A549 (cell line): ENCODE measurements at regions of chr9 and their contacts with region 1.

Region 1: GRCh38 chr9:36166101-36166927 is 2.9 kb upstream of the CCIN start:
- DNase-seq: peak; percentile 87 to 93
- ATAC-seq: peak; percentile 85 to 93
- H3K4me3 ChIP-seq: peak overlapping the region; percentile 47
- H3K27ac ChIP-seq: peak overlapping the region; percentile 65 to 84; a peak in 5 of 6 replicates
- H3K4me1 ChIP-seq: peaks cover 39% of the 10 kb centered on the region
- CTCF ChIP-seq: peak; percentile 91
- EP300 ChIP-seq: no peak
- POLR2A ChIP-seq: no peak
- RAD21 ChIP-seq: peak; percentile 80 to 97

Region 2: GRCh38 chr9:36008774-36009300 is 157.5 kb before region 1 on chr9:
- CTCF ChIA-PET with region 1: interaction called, 61 read pairs
- POLR2A ChIA-PET with region 1: no interaction called
- DNase-seq: peak; percentile 79 to 85
- ATAC-seq: peak; percentile 90 to 99
- H3K4me3 ChIP-seq: no peak overlapping the region
- H3K27ac ChIP-seq: no peak overlapping the region
- H3K4me1 ChIP-seq: no peaks in the 10 kb centered on the region
- CTCF ChIP-seq: peak; percentile 100
- EP300 ChIP-seq: no peak
- POLR2A ChIP-seq: no peak
- RAD21 ChIP-seq: peak; percentile 85

Region 3: DNA sequence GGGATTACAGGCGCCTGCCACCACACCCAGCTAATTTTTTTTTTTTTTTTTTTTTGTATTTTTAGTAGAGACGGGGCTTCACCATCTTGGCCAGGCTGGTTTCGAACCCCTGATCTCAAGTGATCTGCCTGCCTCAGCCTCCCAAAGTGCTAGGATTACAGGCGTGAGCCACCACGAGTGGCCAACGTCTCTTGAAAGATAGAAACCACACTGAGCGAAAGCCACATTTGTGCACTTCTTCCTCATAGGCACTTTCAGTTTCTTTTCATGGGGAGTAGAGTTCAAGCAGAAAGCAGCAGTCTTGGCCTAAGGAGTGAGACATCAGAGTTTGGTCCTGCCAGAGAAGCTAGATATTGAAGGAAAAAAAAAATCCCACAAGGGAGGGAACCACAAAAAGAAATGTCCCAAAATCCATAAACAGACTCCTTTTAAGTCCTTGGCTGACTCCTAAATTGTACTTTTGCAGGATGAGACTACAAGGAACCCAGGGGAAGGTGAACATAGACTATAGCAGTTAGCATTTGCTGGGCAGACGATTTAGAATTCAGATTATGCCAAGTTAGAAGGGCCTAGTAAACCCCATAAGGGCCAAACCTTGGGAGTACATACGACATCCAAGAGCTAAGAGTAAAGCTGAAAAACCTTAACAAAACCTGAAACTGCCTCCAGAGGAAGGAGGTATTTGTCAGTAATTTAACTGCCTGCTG is 73.7 kb before region 1 on chr9:
- CTCF ChIA-PET with region 1: interaction called, 321 read pairs
- POLR2A ChIA-PET with region 1: no interaction called
- DNase-seq: no peak
- ATAC-seq: no peak
- H3K4me3 ChIP-seq: no peak overlapping the region
- H3K27ac ChIP-seq: peak overlapping the region in 1 of 2 experiments; percentile 72; a peak in 2 of 6 replicates
- H3K4me1 ChIP-seq: peaks cover 31% of the 10 kb centered on the region; the same call in 2 of the 3 replicates
- CTCF ChIP-seq: no peak
- EP300 ChIP-seq: no peak
- POLR2A ChIP-seq: no peak
- RAD21 ChIP-seq: no peak

Region 4: DNA sequence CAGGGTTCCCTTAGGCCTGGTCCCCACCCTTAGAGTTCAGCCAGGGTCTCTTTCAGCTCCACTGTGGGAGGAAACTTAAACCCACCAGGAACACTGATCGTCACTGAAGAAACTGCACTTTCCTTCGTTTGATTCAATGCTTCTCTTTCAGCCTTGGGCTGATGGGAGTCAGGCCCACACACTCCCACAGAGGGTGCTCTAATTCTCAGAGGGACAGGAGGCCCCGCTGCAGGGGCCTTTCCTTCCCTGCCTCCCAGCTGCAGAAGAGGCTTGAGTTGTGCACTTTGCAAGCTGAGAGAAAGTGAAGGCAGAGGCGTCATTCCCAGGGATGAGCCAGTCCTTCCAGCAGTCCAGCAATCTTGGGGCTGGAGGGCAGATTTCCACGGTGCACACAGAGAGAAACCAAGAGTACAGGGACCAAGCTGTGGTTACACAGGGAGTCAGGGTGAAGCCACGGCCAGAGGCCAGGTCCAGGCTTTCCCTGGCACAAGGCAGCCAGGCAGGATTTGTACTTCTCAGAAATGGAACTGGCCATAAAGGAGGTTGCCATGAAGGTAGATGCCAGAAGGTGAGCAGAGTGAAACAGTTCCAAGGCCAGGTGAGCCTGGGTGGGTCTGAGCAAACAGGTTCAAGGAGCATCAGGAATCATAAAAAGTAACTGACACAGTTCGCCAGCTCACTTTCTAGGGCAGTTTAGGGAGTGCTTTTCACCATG is 40.1 kb before region 1 on chr9:
- CTCF ChIA-PET with region 1: interaction called, 14 read pairs
- POLR2A ChIA-PET with region 1: no interaction called
- DNase-seq: no peak
- ATAC-seq: peak; percentile 23 to 32; a peak in 2 of 6 replicates
- H3K4me3 ChIP-seq: no peak overlapping the region
- H3K27ac ChIP-seq: no peak overlapping the region
- H3K4me1 ChIP-seq: no peaks in the 10 kb centered on the region
- CTCF ChIP-seq: no peak
- EP300 ChIP-seq: no peak
- POLR2A ChIP-seq: no peak
- RAD21 ChIP-seq: no peak

Region 5: GRCh38 chr9:36148311-36149051 is 17.8 kb before region 1 on chr9:
- CTCF ChIA-PET with region 1: interaction called, 176 read pairs
- POLR2A ChIA-PET with region 1: interaction called, 19 read pairs
- DNase-seq: peak; percentile 85 to 91
- ATAC-seq: peak; percentile 81
- H3K4me3 ChIP-seq: no peak overlapping the region
- H3K27ac ChIP-seq: peak overlapping the region; percentile 65 to 82
- H3K4me1 ChIP-seq: peaks cover 26% of the 10 kb centered on the region
- CTCF ChIP-seq: no peak
- EP300 ChIP-seq: no peak
- POLR2A ChIP-seq: no peak
- RAD21 ChIP-seq: no peak; a peak in 2 of 5 replicates

Region 6: GRCh38 chr9:36190388-36191287 is 24.3 kb after region 1 on chr9 and contains the start of gene CLTA:
- CTCF ChIA-PET with region 1: interaction called, 61 read pairs
- POLR2A ChIA-PET with region 1: interaction called, 30 read pairs
- DNase-seq: peak; percentile 99
- ATAC-seq: peak; percentile 98 to 99
- H3K4me3 ChIP-seq: peak within 1 kb of the TSS; percentile 87
- H3K27ac ChIP-seq: peak within 1 kb of the TSS; percentile 89 to 96
- H3K4me1 ChIP-seq: peaks cover 28% of the 10 kb centered on the region
- CTCF ChIP-seq: peak; percentile 62
- EP300 ChIP-seq: no peak
- POLR2A ChIP-seq: peak; percentile 93
- RAD21 ChIP-seq: peak in 1 of 2 experiments; percentile 30; a peak in 1 of 5 replicates
- polyA plus RNA-seq, gene CLTA: 203 and 291 TPM in 2 replicates